ENCODE measurements at regions of chr18 and their contacts with region 1.

Region 1: GRCh38 chr18:36757081-36757480 is 71.7 kb downstream of the TPGS2 start:
- DNase-seq: no peak
- H3K4me3 ChIP-seq: no peak overlapping the region
- H3K27ac ChIP-seq: peak overlapping the region in 2 of 4 donors; percentile 55 to 56
- H3K4me1 ChIP-seq: peaks cover 0 to 19% (median 10%) of the 10 kb centered on the region in 3 donors
- H3K27me3 ChIP-seq: no peaks in the 10 kb centered on the region
- CTCF ChIP-seq: peak in 5 of 6 experiments; percentile 47 to 85 (median 74)
- POLR2A ChIP-seq: no peak

Region 2: DNA sequence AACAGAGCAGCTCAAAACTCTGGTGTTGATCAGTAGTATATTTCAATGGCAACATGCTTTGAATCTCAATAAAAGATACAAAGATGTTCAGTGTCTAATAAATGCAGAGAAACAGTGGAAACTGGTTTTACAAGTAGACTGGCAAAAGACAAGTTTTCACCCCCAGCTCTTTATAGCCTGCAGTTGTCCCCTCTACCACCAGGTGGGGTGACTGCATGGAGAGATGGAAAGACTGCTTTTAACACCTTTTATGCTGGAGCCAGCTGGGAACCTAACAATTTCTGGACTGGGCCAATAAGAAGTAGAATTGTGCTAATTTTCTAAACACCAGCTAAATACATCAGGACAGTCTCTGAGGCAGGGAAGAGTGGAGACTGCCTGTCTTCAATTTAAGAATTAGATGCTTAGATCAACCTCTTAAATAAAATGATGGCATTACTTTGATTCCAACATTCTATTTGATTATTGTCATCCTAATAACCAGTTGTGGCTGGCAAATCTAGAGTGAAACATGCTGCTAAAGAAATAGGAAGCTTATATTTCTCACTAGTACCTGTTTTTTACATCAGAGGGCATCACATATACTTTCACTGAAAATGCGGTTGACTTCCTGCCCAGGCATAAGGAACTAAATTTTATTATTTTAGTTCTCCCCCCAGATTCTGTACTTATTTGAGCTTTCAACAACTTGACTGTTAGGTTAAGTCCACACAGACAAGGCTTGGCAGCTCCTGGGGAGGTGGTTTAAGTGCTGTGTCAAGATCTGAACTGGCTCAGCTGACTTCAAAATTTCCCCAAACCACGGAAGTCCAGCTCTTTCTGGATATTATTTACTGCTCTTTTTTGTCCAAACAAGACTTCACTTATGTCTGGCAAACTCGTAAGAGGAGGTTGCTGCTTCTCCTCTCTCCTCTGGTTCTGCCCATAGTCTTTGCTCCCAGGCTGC is 68.8 kb before region 1 on chr18:
- intact Hi-C with region 1: loop called (anchors 2 kb)
- DNase-seq: no peak
- H3K4me3 ChIP-seq: no peak overlapping the region
- H3K27ac ChIP-seq: peak overlapping the region in 2 of 4 donors; percentile 1 to 14
- H3K4me1 ChIP-seq: peaks cover 0 to 18% (median 3%) of the 10 kb centered on the region in 3 donors
- H3K27me3 ChIP-seq: no peaks in the 10 kb centered on the region
- CTCF ChIP-seq: peak; percentile 58 to 91 (median 88)
- POLR2A ChIP-seq: no peak

Region 3: DNA sequence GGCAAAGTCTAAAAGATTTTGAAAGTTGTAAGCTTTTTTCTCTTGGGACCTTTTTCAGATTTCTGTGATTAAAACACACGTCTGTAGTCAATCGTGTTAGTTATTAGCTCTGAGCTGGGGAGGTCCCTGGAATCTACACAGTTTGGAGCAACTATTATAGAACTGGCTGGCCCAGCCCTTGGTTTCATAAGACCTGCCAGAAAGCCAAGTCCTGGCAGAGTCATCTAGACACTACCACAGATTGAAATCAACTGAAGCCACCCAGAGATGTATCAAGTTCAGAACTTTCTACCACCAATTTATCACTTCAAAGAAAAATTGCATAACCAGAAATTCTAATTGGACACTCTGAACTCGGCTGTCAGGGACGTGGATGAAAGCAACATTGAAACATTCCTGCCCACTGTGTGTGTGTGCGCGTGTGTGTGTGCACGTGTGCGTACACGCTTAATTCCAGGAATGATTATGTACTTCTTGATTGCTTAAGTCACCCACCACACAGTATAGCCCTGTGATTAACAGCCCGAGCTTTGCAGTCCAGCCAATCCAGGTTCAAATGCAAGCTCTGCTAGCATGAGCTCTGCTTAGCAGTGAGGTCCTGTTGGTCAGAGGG is 54.6 kb before region 1 on chr18:
- intact Hi-C with region 1: no loop called
- DNase-seq: no peak
- H3K4me3 ChIP-seq: no peak overlapping the region
- H3K27ac ChIP-seq: peak overlapping the region; percentile 30 to 80 (median 62)
- H3K4me1 ChIP-seq: peaks cover 0 to 50% (median 12%) of the 10 kb centered on the region in 3 donors
- H3K27me3 ChIP-seq: no peaks in the 10 kb centered on the region
- CTCF ChIP-seq: no peak
- POLR2A ChIP-seq: no peak

Region 4: GRCh38 chr18:36899289-36899688 is 142.2 kb after region 1 on chr18:
- intact Hi-C with region 1: no loop called
- DNase-seq: no peak
- H3K4me3 ChIP-seq: no peak overlapping the region
- H3K27ac ChIP-seq: no peak overlapping the region
- H3K4me1 ChIP-seq: peaks cover 0 to 5% (median 0%) of the 10 kb centered on the region in 3 donors
- H3K27me3 ChIP-seq: no peaks in the 10 kb centered on the region
- CTCF ChIP-seq: peak in 1 of 6 experiments; percentile 51
- POLR2A ChIP-seq: no peak

Region 5: GRCh38 chr18:37309055-37309454 is 552.0 kb after region 1 on chr18:
- intact Hi-C with region 1: no loop called
- DNase-seq: no peak
- H3K4me3 ChIP-seq: no peak overlapping the region
- H3K27ac ChIP-seq: no peak overlapping the region
- H3K4me1 ChIP-seq: no peaks in the 10 kb centered on the region
- H3K27me3 ChIP-seq: peaks cover 0 to 15% (median 0%) of the 10 kb centered on the region in 4 donors
- CTCF ChIP-seq: no peak
- POLR2A ChIP-seq: no peak

Measured in esophagus squamous epithelium (tissue), 5 donors.